Right ventricle myocardium inferior (tissue), 1 donor: ENCODE measurements at regions of chr9 and their contacts with region 1.

Region 1: DNA sequence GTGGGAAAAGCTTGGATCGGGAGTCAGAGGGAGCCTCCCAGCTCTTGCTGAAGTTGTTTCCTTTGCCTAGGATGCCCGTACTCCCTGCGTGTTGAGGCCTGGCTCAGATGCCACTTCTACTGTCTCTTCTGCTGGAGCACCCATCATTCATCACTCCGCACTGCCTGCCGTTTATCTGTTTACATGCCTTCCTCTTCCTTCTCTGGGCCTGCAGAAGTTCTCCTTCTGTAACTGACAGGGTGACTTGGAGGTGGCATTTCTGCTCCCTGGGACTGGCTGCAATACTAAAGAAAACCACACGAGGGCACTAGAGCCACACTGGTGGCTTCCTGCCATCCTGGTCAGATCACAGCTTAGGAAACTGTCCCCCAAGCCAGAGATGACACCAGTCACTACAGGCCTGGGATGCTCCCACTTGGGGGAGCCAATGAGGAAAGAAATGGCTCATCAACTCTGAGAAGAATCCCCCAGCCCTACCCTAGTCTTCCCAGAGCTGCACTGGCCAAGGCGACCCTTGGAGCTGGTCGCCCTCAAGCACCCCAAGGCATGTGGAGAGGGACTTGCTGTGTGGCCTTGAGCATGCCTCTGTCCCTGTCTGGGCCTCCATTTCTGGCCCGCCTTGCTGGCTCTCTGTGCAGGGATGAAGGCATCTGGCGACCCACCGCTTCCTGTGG is 9.7 kb upstream of the SLC25A51 start:
- DNase-seq: peak; percentile 81
- ATAC-seq: peak; percentile 85

Region 2: GRCh38 chr9:37827473-37828165 is 86.0 kb before region 1 on chr9:
- intact Hi-C with region 1: no loop called
- DNase-seq: no peak
- ATAC-seq: no peak

Region 3: GRCh38 chr9:37943329-37944265 is 30.0 kb after region 1 on chr9:
- intact Hi-C with region 1: loop called (anchors 2 kb)
- DNase-seq: peak; percentile 54
- ATAC-seq: peak; percentile 31

Region 4: DNA sequence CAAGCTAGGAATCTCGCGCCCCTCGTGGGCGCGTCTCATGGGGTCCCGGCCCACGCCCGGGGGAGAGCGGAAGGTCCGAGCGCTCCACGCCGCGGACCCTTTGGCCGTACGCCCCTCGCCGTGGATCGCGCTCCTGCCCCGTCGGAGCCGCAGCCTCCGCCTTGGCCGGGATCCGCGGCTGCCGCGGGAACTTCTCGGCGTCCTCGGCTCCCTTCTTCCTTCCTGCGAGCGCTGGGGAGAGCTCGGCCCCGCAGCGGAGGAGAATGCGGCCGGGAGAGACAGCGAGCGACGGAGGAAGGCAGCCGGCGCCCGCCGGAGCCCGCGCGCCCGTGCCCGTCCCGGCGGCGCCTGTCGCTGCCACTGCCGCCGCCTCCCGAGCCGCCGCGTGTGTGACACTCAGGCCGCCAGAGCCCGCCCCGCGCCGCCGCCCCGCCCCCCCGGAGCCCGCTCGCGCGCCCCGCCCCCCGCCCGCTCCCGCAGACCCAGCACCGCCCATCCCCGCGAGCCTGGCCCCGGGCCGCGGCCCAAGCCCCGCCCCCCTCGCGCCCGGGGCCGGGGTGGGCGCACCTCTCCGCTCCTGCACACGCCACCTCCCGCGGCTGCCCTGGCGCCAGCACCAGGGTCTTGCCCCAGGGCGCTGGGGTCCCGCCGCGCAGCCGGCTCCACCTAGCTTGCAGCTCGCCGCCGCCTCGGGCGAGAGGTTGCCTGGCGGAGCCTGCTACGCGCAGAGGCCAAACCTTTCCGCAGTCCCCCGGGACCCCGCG is 155.4 kb after region 1 on chr9 and contains the start of gene SHB:
- intact Hi-C with region 1: loop called (anchors 2 kb)
- DNase-seq: peak; percentile 92
- ATAC-seq: peak; percentile 90
- total RNA-seq, gene SHB: 14.7 TPM

Region 5: GRCh38 chr9:38160613-38161215 is 247.1 kb after region 1 on chr9:
- intact Hi-C with region 1: loop called (anchors 2 kb)
- DNase-seq: no peak
- ATAC-seq: peak; percentile 53

Region 6: DNA sequence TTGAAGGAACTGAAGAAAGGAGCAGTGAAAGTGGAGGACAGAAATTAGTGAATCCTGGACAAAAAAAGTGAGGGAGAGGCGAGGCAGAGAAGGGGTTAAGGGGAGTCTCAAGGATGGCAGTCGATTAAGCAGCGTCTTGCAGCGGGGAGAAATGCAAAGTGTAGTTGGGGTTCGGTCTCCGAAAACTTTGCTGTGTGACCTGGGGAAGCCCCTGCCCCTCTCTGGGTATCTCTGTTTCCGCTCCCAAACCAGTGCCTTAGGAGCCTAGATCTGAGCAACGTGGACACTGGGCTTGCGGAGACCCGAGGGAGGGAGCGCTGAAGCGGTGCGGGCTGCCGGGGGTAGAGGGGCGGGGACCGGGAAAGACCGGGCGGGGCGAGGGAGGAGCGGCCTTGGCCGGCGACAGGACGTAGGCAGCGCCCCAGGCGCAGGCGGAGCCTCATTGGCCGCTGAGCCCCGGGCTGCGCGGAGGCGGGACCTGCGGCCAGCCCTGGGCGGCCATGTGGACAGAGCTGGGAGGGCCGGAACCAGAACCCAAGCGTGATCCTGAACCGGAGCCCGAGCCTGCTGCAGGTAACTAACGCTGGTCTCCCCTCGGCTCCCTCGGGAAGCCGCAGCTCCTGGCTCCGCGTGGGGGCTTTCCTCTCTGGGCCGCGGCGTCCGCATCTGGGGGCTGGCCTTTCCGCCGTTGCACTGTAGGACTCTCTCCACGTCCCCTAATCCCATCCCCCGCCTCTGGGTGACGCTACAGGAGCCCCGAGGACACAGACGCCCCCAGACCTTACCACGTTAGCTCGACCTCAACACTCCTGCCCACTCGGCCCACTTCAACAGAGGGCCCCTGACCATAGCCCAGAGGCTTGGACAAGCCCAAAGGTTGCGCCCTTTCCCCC is 478.9 kb after region 1 on chr9 and contains the start of gene ALDH1B1:
- intact Hi-C with region 1: loop called (anchors 10 kb)
- DNase-seq: peak; percentile 93
- ATAC-seq: peak; percentile 100
- total RNA-seq, gene ALDH1B1: 18.4 TPM